Activated CD4-positive, alpha-beta T cell treated with anti-CD3 and anti-CD28 coated beads for 36 hours (primary cell): ENCODE measurements at regions of chr1 and their contacts with region 1.

Region 1: GRCh38 chr1:212665241-212666115 is 34.2 kb downstream of the BATF3 start:
- DNase-seq: peak; percentile 91
- ATAC-seq: peak; percentile 98
- H3K4me3 Mint-ChIP-seq: peak overlapping the region; percentile 57
- H3K27ac Mint-ChIP-seq: peak overlapping the region; percentile 77
- H3K4me1 Mint-ChIP-seq: peaks cover 15% of the 10 kb centered on the region
- H3K27me3 Mint-ChIP-seq: peaks cover 3% of the 10 kb centered on the region

Region 2: GRCh38 chr1:210828996-210829596 is 1836.4 kb before region 1 on chr1:
- CTCF ChIA-PET with region 1: no interaction called
- POLR2A ChIA-PET with region 1: no interaction called
- intact Hi-C with region 1: no loop called
- DNase-seq: no peak
- ATAC-seq: no peak
- H3K4me3 Mint-ChIP-seq: no peak overlapping the region
- H3K27ac Mint-ChIP-seq: no peak overlapping the region
- H3K4me1 Mint-ChIP-seq: no peaks in the 10 kb centered on the region
- H3K27me3 Mint-ChIP-seq: peaks cover 6% of the 10 kb centered on the region

Region 3: GRCh38 chr1:212045981-212046380 is 619.5 kb before region 1 on chr1:
- CTCF ChIA-PET with region 1: no interaction called
- POLR2A ChIA-PET with region 1: no interaction called
- intact Hi-C with region 1: no loop called
- DNase-seq: no peak
- ATAC-seq: no peak
- H3K4me3 Mint-ChIP-seq: no peak overlapping the region
- H3K27ac Mint-ChIP-seq: no peak overlapping the region
- H3K4me1 Mint-ChIP-seq: peaks cover 4% of the 10 kb centered on the region
- H3K27me3 Mint-ChIP-seq: peaks cover under 1% of the 10 kb centered on the region

Region 4: GRCh38 chr1:212651521-212651920 is 14.0 kb before region 1 on chr1:
- CTCF ChIA-PET with region 1: interaction called, 13 read pairs
- POLR2A ChIA-PET with region 1: no interaction called
- intact Hi-C with region 1: no loop called
- DNase-seq: no peak
- ATAC-seq: no peak
- H3K4me3 Mint-ChIP-seq: no peak overlapping the region
- H3K27ac Mint-ChIP-seq: no peak overlapping the region
- H3K4me1 Mint-ChIP-seq: no peaks in the 10 kb centered on the region
- H3K27me3 Mint-ChIP-seq: peaks cover 9% of the 10 kb centered on the region

Region 5: DNA sequence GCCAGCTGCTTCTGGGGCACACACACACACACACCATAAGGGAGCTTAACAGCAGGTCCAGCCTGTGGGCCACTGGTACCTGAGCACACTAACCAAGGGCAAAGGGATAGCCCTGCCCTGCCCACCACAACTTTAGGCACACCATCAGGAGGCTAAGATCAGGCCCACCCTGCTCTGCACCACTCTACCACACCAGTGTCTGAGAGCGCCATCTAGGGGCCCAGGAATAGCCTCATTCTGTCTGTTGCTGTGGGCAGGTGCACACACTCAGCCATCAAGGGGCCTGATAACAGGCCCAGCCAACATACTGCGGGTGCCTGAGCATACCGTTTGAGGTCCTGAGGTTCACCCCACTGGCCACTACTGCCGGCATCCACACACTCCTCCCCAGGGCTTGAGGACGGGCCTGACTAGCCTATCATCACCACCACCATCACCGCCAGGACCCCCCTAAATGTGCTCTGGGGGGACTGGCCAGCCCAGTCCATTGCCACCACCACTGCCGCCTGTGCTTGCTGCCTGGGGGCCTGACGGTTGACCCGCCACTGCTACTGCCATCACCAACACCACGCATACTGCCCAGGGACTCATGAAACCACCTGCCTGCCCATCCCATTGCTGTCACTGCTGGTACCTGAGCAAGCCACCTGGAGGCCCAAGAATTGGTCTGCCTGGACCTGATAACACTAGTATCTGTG is 94.8 kb after region 1 on chr1:
- CTCF ChIA-PET with region 1: interaction called, 11 read pairs
- POLR2A ChIA-PET with region 1: no interaction called
- intact Hi-C with region 1: loop called (anchors 1 to 5 kb)
- DNase-seq: peak; percentile 83
- ATAC-seq: peak; percentile 96
- H3K4me3 Mint-ChIP-seq: no peak overlapping the region
- H3K27ac Mint-ChIP-seq: no peak overlapping the region
- H3K4me1 Mint-ChIP-seq: peaks cover 22% of the 10 kb centered on the region
- H3K27me3 Mint-ChIP-seq: no peaks in the 10 kb centered on the region

Region 6: DNA sequence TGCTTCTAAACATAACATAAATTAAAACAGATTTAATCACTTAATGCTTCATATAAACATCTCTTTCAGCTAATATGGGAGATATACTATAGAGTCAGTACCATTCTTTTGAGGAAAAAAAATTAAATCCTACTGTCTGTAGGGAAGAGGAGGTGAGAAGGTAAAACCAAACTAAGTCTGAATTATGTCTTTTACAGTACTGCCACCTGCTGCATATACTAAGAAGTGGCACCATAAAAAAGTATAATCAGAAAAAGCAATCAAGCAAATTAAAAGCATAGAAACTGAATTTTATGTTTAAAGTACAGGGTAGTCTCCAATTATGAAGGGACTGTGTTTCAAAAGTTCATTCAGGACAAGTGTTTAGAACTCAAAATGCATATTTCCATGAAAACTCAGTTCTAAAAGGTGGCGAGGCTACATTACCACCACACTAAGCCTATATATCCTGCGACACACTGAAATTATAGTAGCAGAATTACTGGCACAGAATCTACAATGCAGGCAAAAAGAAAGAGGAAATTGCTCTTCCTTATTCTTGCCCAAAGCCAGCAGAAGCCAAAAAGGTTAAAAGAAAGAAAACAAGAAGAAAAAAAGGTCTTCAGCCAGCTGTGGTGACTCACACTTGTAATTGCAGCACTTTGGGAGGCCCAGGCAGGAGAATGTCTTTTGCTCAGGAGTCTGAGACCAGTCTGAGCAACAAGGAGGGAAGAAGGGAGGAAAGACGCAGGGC is 117.1 kb after region 1 on chr1:
- CTCF ChIA-PET with region 1: interaction called, 88 read pairs
- POLR2A ChIA-PET with region 1: no interaction called
- intact Hi-C with region 1: loop called (anchors 1 kb)
- DNase-seq: no peak
- ATAC-seq: peak; percentile 73
- H3K4me3 Mint-ChIP-seq: no peak overlapping the region
- H3K27ac Mint-ChIP-seq: no peak overlapping the region
- H3K4me1 Mint-ChIP-seq: peaks cover 27% of the 10 kb centered on the region
- H3K27me3 Mint-ChIP-seq: no peaks in the 10 kb centered on the region

Region 7: DNA sequence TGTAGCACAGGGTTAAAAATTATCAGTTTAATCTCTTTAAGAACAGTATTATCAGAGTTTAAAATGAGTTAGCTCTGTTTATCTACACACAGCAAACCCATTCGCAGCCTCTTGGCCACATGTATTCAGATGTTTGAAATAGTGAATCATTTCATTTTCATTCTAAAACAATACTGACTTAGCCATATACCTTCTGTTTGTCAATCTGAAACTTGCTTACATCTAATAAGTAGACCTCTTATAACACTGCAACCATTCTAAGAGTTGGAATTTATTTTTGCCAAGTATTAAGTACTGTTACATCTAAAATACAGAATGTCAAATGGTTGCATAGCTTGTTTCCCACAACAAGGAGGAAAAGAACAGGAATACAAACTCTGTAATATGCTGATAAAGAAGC is 324.8 kb after region 1 on chr1:
- CTCF ChIA-PET with region 1: interaction called, 42 read pairs
- POLR2A ChIA-PET with region 1: interaction called, 3 read pairs
- intact Hi-C with region 1: loop called (anchors 1 kb)
- DNase-seq: no peak
- ATAC-seq: no peak
- H3K4me3 Mint-ChIP-seq: no peak overlapping the region
- H3K27ac Mint-ChIP-seq: no peak overlapping the region
- H3K4me1 Mint-ChIP-seq: peaks cover 8% of the 10 kb centered on the region
- H3K27me3 Mint-ChIP-seq: no peaks in the 10 kb centered on the region

Region 8: GRCh38 chr1:213103377-213104306 is 438.2 kb after region 1 on chr1:
- CTCF ChIA-PET with region 1: no interaction called
- POLR2A ChIA-PET with region 1: no interaction called
- intact Hi-C with region 1: no loop called
- DNase-seq: no peak
- ATAC-seq: peak; percentile 39
- H3K4me3 Mint-ChIP-seq: no peak overlapping the region
- H3K27ac Mint-ChIP-seq: no peak overlapping the region
- H3K4me1 Mint-ChIP-seq: peaks cover 9% of the 10 kb centered on the region
- H3K27me3 Mint-ChIP-seq: no peaks in the 10 kb centered on the region